ENCODE measurements at regions of chr5 and their contacts with region 1.

Region 1: DNA sequence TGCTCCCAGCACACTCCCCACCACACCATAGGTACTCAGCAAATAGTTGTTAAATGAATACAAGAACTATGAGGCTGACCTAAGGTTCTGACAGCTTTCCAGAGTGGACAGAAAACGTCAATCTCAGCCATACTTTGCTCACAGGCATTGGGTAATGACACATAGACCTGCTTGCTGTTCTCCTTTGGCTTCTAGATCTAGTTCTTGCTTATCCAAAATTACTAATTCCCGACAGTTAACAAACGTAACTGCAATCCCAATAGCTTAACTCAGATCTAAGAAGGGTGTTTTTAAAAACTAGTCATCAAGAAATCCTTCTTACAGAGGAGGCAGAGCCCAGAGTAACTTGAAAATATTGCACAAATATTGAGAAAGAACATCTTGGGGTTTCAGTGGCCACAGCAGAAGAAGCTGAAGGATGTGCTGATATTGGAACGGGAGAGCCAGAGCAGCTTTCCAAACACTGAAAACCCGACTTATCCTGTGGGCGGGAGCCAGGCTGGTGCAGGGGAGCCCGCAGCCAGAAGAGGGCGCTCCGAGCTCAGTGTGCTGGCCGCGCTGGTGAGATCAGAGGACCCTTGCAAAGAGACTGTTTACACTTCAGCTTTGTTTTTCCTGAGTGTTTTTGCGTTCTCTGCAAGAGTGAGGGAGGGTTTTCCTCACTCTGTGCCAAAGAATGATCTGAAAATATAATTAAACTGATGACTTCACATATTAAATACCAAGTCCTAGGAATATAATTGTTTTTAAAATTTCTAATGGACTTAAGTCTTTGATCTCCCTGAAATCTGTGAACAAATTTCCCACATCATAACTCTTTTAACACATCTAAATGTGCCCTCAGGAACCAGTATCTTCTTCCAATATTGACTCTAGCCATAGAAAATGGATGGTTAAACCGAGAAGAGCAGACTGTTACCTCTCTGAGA is 30.3 kb downstream of the FGF1 start:
- DNase-seq: peak; percentile 77
- H3K4me3 Mint-ChIP-seq: no peak overlapping the region
- H3K27ac Mint-ChIP-seq: no peak overlapping the region
- H3K4me1 Mint-ChIP-seq: no peaks in the 10 kb centered on the region
- H3K27me3 Mint-ChIP-seq: peaks cover 5% of the 10 kb centered on the region

Region 2: DNA sequence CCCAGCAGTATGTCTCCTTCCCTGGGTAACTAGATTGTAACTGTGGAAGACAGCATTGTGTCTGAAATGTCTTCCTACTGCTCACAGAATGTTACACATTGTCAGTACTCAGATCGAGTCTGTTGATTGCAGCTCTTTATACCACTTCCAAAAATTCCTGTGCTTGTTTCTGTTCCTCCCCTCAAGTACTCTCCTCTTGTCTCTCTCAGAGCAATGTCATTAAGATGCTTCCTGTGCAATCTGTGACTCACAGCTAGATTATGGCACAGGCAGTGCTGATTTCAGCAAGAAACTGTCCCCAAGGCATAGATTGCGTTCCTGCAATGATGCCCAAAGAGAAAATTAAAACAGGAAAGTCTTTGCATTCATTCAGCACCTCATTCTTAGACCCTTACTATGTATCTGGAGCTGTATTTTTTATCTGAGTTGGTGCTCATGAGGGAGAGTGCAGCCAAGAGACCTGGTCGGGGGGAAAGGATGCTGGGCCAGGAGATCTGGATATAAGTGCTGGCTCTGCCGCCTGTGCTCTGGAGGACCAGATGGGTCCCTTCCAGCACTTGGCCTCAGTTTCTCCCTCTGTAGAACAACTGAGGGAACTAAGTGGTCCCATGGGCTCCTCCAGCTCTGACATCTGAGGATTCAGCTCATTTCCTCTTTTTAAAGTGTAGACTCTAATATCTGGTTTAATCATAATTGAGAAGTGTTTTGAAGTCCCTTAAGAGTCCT is 602.0 kb before region 1 on chr5:
- CTCF ChIA-PET with region 1: no interaction called
- intact Hi-C with region 1: no loop called
- DNase-seq: peak; percentile 50
- H3K4me3 Mint-ChIP-seq: peak overlapping the region; percentile 10
- H3K27ac Mint-ChIP-seq: no peak overlapping the region
- H3K4me1 Mint-ChIP-seq: peaks cover 32% of the 10 kb centered on the region
- H3K27me3 Mint-ChIP-seq: no peaks in the 10 kb centered on the region

Region 3: DNA sequence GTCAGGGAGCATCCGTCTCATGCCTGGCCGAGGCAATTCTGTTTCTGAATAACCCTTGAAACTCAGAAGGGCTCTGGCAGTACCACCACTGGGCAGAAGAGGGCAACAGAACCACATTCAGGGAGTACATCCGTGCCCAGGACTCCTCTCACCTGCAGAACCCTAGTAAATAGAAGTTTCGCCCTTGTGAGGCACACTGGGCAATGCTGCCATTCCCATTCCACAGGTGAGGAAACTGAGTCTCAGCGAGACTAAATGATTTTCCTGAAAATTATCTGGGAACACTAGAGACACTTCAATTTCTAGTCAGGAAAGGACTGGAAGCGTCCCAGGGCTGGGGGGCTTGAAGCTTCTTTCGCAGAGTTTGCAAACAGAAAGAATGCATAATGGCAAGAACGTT is 44.4 kb before region 1 on chr5:
- CTCF ChIA-PET with region 1: interaction called, 14 read pairs
- intact Hi-C with region 1: loop called (anchors 1 kb)
- DNase-seq: peak; percentile 88
- H3K4me3 Mint-ChIP-seq: no peak overlapping the region
- H3K27ac Mint-ChIP-seq: no peak overlapping the region
- H3K4me1 Mint-ChIP-seq: no peaks in the 10 kb centered on the region
- H3K27me3 Mint-ChIP-seq: peaks cover 5% of the 10 kb centered on the region

Region 4: GRCh38 chr5:142644640-142645361 is 10.8 kb before region 1 on chr5:
- CTCF ChIA-PET with region 1: interaction called, 33 read pairs
- intact Hi-C with region 1: no loop called
- DNase-seq: no peak
- H3K4me3 Mint-ChIP-seq: no peak overlapping the region
- H3K27ac Mint-ChIP-seq: no peak overlapping the region
- H3K4me1 Mint-ChIP-seq: no peaks in the 10 kb centered on the region
- H3K27me3 Mint-ChIP-seq: no peaks in the 10 kb centered on the region

Region 5: GRCh38 chr5:142671801-142672200 is 16.2 kb after region 1 on chr5:
- CTCF ChIA-PET with region 1: interaction called, 18 read pairs
- intact Hi-C with region 1: no loop called
- DNase-seq: no peak
- H3K4me3 Mint-ChIP-seq: no peak overlapping the region
- H3K27ac Mint-ChIP-seq: no peak overlapping the region
- H3K4me1 Mint-ChIP-seq: no peaks in the 10 kb centered on the region
- H3K27me3 Mint-ChIP-seq: no peaks in the 10 kb centered on the region

Region 6: GRCh38 chr5:142906863-142907671 is 251.5 kb after region 1 on chr5:
- CTCF ChIA-PET with region 1: no interaction called
- intact Hi-C with region 1: no loop called
- DNase-seq: no peak
- H3K4me3 Mint-ChIP-seq: no peak overlapping the region
- H3K27ac Mint-ChIP-seq: no peak overlapping the region
- H3K4me1 Mint-ChIP-seq: no peaks in the 10 kb centered on the region
- H3K27me3 Mint-ChIP-seq: no peaks in the 10 kb centered on the region